Breast epithelium (tissue), 4 donors: ENCODE measurements at regions of chrX and their contacts with region 1.

Region 1: GRCh38 chrX:110407910-110408545 is 49.4 kb downstream of the RTL9 start:
- DNase-seq: peak in 1 of 2 donors; percentile 27
- H3K4me3 ChIP-seq: no peak overlapping the region
- H3K27ac ChIP-seq: no peak overlapping the region
- H3K4me1 ChIP-seq: no peaks in the 10 kb centered on the region
- H3K27me3 ChIP-seq: peaks cover 0 to 71% of the 10 kb centered on the region in 2 donors
- CTCF ChIP-seq: peak; percentile 47 to 70 (median 58)
- POLR2A ChIP-seq: no peak

Region 2: DNA sequence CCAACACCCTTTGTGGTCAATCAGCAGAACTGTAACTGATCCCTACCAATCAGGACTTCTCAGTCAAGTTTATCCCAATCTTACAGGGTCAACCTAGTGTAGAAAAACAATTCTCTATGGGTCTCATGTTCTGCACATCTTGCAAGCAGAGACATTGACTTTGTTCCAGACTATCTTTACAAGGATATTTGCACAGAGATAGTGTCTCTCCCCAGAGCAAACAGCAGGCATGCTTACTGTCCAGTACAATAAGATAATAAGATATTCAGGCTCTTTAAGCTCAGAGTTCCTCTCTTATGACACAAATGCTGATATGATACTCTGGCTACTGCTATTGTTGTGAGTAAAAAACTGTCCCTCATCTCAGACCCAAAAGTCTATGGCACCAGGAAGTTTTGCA is 728.2 kb before region 1 on chrX:
- intact Hi-C with region 1: loop called (anchors 5 kb)
- DNase-seq: no peak
- H3K4me3 ChIP-seq: no peak overlapping the region
- H3K27ac ChIP-seq: no peak overlapping the region
- H3K4me1 ChIP-seq: no peaks in the 10 kb centered on the region
- H3K27me3 ChIP-seq: peaks cover 0 to 45% of the 10 kb centered on the region in 2 donors
- CTCF ChIP-seq: no peak
- POLR2A ChIP-seq: no peak

Region 3: DNA sequence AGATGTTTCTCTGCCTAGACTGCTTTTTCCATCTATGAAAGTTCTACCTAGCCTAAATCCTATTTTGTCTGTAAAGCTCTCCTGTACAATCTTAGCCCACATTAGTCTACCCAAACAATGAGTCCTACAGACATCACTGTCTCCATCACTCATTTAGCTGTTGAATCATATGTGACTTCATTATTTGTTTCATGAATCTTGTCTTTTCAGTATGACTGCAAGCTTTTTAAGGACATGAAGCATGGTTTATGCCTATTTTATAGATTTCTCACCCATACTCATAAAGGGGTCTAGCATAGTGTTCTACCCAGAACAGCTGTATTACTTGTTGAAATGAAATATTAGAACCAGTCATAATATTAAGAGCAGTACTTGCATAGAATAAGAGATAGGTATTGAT is 103.1 kb before region 1 on chrX:
- intact Hi-C with region 1: no loop called
- DNase-seq: no peak
- H3K4me3 ChIP-seq: no peak overlapping the region
- H3K27ac ChIP-seq: no peak overlapping the region
- H3K4me1 ChIP-seq: no peaks in the 10 kb centered on the region
- H3K27me3 ChIP-seq: peaks cover 0 to 13% of the 10 kb centered on the region in 2 donors
- CTCF ChIP-seq: no peak
- POLR2A ChIP-seq: no peak

Region 4: DNA sequence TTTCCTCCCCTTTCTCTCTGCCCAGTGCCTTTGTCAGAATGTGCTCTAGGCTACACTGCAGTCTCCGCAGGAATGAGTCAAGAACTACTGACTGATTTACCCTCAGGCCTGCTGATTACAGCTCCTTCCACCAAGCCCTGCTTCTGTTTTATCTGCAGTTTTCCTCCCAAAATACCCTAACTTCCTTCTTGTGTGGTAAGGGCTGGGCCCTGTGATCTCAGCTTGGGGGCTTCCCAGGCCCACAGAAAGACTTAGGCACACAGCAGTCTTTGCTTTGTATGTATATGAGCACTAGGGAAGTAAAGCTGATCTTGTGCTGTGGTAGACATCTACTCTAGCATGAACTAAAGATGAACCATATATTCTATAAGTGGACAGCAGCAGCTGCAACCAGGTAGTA is 706.8 kb after region 1 on chrX:
- intact Hi-C with region 1: no loop called
- DNase-seq: no peak
- H3K4me3 ChIP-seq: no peak overlapping the region
- H3K27ac ChIP-seq: no peak overlapping the region
- H3K4me1 ChIP-seq: no peaks in the 10 kb centered on the region
- H3K27me3 ChIP-seq: peaks cover 0 to 51% of the 10 kb centered on the region in 2 donors
- CTCF ChIP-seq: no peak
- POLR2A ChIP-seq: no peak